ENCODE measurements at regions of chr15 and their contacts with region 1.

Region 1: GRCh38 chr15:28132524-28133275 is 33.6 kb upstream of the OCA2 start:
- DNase-seq: no peak
- H3K4me3 ChIP-seq: no peak overlapping the region
- H3K4me3 Mint-ChIP-seq: peak overlapping the region in 2 of 8 donors; percentile 49 to 50
- H3K27ac ChIP-seq: no peak overlapping the region
- H3K27ac Mint-ChIP-seq: peak overlapping the region in 2 of 7 donors; percentile 42 to 59
- H3K4me1 ChIP-seq: peaks cover 26% of the 10 kb centered on the region
- H3K4me1 Mint-ChIP-seq: peaks cover 22 to 69% (median 31%) of the 10 kb centered on the region in 4 donors
- H3K27me3 ChIP-seq: no peaks in the 10 kb centered on the region
- H3K27me3 Mint-ChIP-seq: no peaks in the 10 kb centered on the region

Region 2: DNA sequence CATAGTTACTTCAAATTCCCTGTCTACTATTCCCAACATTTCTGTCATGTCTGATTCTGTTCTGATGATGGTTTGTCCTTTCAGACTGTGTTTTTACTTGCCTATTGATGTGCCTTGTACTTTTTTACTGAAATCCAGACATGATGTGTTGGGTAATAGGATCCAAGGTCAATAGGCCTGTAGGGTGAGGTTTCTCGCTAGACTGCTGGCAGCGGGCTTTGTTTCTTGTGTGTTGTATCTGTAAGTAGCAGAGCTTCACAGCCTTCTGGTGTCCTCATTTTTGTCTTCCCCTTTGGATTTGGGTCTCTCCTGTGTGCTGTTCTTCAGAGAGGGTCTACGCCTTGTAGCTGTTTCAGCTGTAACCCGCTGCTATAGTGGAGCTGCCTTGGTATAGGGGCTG is 1021.4 kb before region 1 on chr15:
- CTCF ChIA-PET with region 1: no interaction called
- POLR2A ChIA-PET with region 1: no interaction called
- intact Hi-C with region 1: no loop called
- DNase-seq: no peak
- H3K4me3 ChIP-seq: no peak overlapping the region
- H3K4me3 Mint-ChIP-seq: no peak overlapping the region
- H3K27ac ChIP-seq: no peak overlapping the region
- H3K27ac Mint-ChIP-seq: no peak overlapping the region
- H3K4me1 ChIP-seq: no peaks in the 10 kb centered on the region
- H3K4me1 Mint-ChIP-seq: no peaks in the 10 kb centered on the region
- H3K27me3 ChIP-seq: no peaks in the 10 kb centered on the region
- H3K27me3 Mint-ChIP-seq: no peaks in the 10 kb centered on the region

Region 3: GRCh38 chr15:28098766-28099554 is 33.7 kb before region 1 on chr15 and contains the start of gene OCA2:
- CTCF ChIA-PET with region 1: interaction called, 4 read pairs
- POLR2A ChIA-PET with region 1: interaction called, 24 read pairs
- intact Hi-C with region 1: no loop called
- DNase-seq: peak in 4 of 5 donors; percentile 45 to 55 (median 48)
- H3K4me3 ChIP-seq: no peak within 1 kb of the TSS
- H3K4me3 Mint-ChIP-seq: peak within 1 kb of the TSS; percentile 39 to 90 (median 62)
- H3K27ac ChIP-seq: no peak within 1 kb of the TSS
- H3K27ac Mint-ChIP-seq: peak within 1 kb of the TSS in 2 of 7 donors; percentile 26 to 62
- H3K4me1 ChIP-seq: peaks cover 40% of the 10 kb centered on the region
- H3K4me1 Mint-ChIP-seq: peaks cover 15 to 47% (median 35%) of the 10 kb centered on the region in 4 donors
- H3K27me3 ChIP-seq: peaks cover 33% of the 10 kb centered on the region
- H3K27me3 Mint-ChIP-seq: peaks cover 33 to 47% of the 10 kb centered on the region in 2 donors
- total RNA-seq, gene OCA2: not detected

Region 4: GRCh38 chr15:28107111-28107888 is 25.4 kb before region 1 on chr15:
- CTCF ChIA-PET with region 1: interaction called, 44 read pairs
- POLR2A ChIA-PET with region 1: interaction called, 30 read pairs
- intact Hi-C with region 1: no loop called
- DNase-seq: peak in 2 of 5 donors; percentile 31 to 34
- H3K4me3 ChIP-seq: peak overlapping the region; percentile 29 to 68
- H3K4me3 Mint-ChIP-seq: peak overlapping the region; percentile 85 to 94 (median 89)
- H3K27ac ChIP-seq: no peak overlapping the region
- H3K27ac Mint-ChIP-seq: peak overlapping the region in 6 of 7 donors; percentile 48 to 88 (median 58)
- H3K4me1 ChIP-seq: peaks cover 16% of the 10 kb centered on the region
- H3K4me1 Mint-ChIP-seq: peaks cover 8 to 13% (median 12%) of the 10 kb centered on the region in 4 donors
- H3K27me3 ChIP-seq: peaks cover 4% of the 10 kb centered on the region
- H3K27me3 Mint-ChIP-seq: peaks cover 3 to 12% of the 10 kb centered on the region in 2 donors

Region 5: DNA sequence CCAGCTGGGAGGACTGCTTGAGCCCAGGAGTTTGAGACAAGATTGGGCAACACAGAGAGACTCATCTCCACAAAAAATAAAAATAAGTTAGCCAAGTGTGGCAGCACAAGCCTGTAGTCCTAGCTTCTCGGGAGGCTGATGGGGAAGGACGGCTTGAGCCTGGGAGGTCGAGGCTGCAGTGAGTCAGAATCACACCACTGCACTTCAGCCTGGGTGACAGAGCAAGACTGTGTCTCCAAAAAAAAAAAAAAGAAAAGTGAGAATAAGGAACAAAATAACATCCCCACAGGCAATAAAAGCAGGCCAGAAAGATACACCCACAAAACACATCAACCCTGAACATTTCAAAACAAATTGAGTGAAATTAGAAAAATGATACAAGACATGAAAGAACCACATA is 15.1 kb after region 1 on chr15:
- CTCF ChIA-PET with region 1: interaction called, 37 read pairs
- POLR2A ChIA-PET with region 1: interaction called, 29 read pairs
- intact Hi-C with region 1: no loop called
- DNase-seq: no peak
- H3K4me3 ChIP-seq: no peak overlapping the region
- H3K4me3 Mint-ChIP-seq: no peak overlapping the region
- H3K27ac ChIP-seq: no peak overlapping the region
- H3K27ac Mint-ChIP-seq: peak overlapping the region in 3 of 7 donors; percentile 4 to 87 (median 46)
- H3K4me1 ChIP-seq: no peaks in the 10 kb centered on the region
- H3K4me1 Mint-ChIP-seq: peaks cover 0 to 65% (median 6%) of the 10 kb centered on the region in 4 donors
- H3K27me3 ChIP-seq: no peaks in the 10 kb centered on the region
- H3K27me3 Mint-ChIP-seq: no peaks in the 10 kb centered on the region

Region 6: GRCh38 chr15:28153492-28154119 is 20.9 kb after region 1 on chr15:
- CTCF ChIA-PET with region 1: interaction called, 37 read pairs
- POLR2A ChIA-PET with region 1: interaction called, 29 read pairs
- intact Hi-C with region 1: no loop called
- DNase-seq: no peak
- H3K4me3 ChIP-seq: no peak overlapping the region
- H3K4me3 Mint-ChIP-seq: no peak overlapping the region
- H3K27ac ChIP-seq: no peak overlapping the region
- H3K27ac Mint-ChIP-seq: no peak overlapping the region
- H3K4me1 ChIP-seq: no peaks in the 10 kb centered on the region
- H3K4me1 Mint-ChIP-seq: peaks cover 0 to 26% (median 3%) of the 10 kb centered on the region in 4 donors
- H3K27me3 ChIP-seq: no peaks in the 10 kb centered on the region
- H3K27me3 Mint-ChIP-seq: no peaks in the 10 kb centered on the region